B cell (primary cell): ENCODE measurements at regions of chr4 and their contacts with region 1.

Region 1: GRCh38 chr4:78845472-78845871 is 69.3 kb downstream of the BMP2K start:
- DNase-seq: peak; percentile 20
- ATAC-seq: peak; percentile 31
- H3K4me3 ChIP-seq: no peak overlapping the region
- H3K4me3 Mint-ChIP-seq: no peak overlapping the region
- H3K27ac ChIP-seq: peak overlapping the region in 1 of 2 donors; percentile 65
- H3K27ac Mint-ChIP-seq: peak overlapping the region; percentile 41
- H3K4me1 ChIP-seq: peaks cover 0 to 17% of the 10 kb centered on the region in 2 donors
- H3K4me1 Mint-ChIP-seq: peaks cover 31% of the 10 kb centered on the region
- H3K27me3 ChIP-seq: no peaks in the 10 kb centered on the region
- H3K27me3 Mint-ChIP-seq: no peaks in the 10 kb centered on the region
- CTCF ChIP-seq: no peak

Region 2: DNA sequence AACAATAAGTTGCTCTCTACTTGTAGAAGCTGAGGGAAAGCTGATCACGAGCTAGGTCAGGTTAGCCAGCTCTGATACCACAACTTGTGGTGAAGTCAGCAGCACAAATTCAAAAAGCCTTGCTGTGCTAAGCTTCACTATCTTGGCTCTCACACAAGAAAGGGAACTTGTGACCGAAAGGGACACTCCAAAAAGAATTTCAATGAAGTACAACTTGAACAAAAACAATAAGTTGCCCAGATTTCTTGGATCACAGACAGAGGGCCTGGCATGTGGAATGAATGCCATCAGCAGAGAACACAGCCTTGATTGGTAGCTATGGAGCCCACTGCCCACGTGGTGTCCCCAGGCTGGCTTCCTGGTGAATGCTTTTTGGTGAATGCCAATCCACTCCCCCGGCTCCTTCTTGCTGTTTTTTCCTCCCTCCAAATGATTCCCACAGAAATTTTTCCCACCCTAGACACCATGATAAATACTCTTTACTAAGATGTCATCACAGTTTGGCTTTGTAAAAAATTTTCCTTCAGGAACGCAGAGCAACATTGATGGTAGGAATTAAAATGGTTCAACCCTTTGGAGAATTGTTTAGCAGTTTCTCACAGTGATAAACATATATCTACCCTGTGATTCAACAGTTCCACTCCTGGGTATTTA is 211.3 kb before region 1 on chr4:
- CTCF ChIA-PET with region 1: no interaction called
- POLR2A ChIA-PET with region 1: no interaction called
- intact Hi-C with region 1: no loop called
- DNase-seq: peak; percentile 48
- ATAC-seq: no peak
- H3K4me3 ChIP-seq: no peak overlapping the region
- H3K4me3 Mint-ChIP-seq: no peak overlapping the region
- H3K27ac ChIP-seq: peak overlapping the region in 1 of 2 donors; percentile 50
- H3K27ac Mint-ChIP-seq: peak overlapping the region; percentile 60
- H3K4me1 ChIP-seq: peaks cover 71 to 73% of the 10 kb centered on the region in 2 donors
- H3K4me1 Mint-ChIP-seq: peaks cover 74% of the 10 kb centered on the region
- H3K27me3 ChIP-seq: no peaks in the 10 kb centered on the region
- H3K27me3 Mint-ChIP-seq: no peaks in the 10 kb centered on the region
- CTCF ChIP-seq: no peak

Region 3: DNA sequence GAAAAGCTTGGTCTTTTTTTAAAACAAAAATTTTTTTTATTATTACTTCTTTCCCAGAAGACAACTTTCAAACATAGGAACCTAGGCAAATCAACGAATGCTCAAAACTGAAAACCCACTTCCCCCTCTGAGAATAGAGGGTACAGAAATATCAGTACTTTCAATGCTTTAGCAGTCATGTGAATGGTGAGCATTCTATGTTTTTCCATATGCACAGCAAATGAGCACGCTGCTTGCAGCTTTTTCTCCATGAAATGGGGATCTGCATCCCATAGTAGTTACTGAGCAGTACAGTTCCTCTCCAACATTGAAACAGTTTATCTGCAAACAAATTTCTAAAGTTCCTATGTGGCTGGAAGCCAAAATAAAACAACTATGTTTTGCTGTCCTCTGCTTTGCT is 177.7 kb before region 1 on chr4:
- CTCF ChIA-PET with region 1: no interaction called
- POLR2A ChIA-PET with region 1: no interaction called
- intact Hi-C with region 1: no loop called
- DNase-seq: peak; percentile 47
- ATAC-seq: peak; percentile 62
- H3K4me3 ChIP-seq: peak overlapping the region in 2 of 5 experiments; percentile 26 to 28
- H3K4me3 Mint-ChIP-seq: peak overlapping the region; percentile 80
- H3K27ac ChIP-seq: peak overlapping the region; percentile 50 to 73
- H3K27ac Mint-ChIP-seq: peak overlapping the region; percentile 85
- H3K4me1 ChIP-seq: peaks cover 75 to 78% of the 10 kb centered on the region in 2 donors
- H3K4me1 Mint-ChIP-seq: peaks cover 88% of the 10 kb centered on the region
- H3K27me3 ChIP-seq: no peaks in the 10 kb centered on the region
- H3K27me3 Mint-ChIP-seq: no peaks in the 10 kb centered on the region
- CTCF ChIP-seq: no peak

Region 4: DNA sequence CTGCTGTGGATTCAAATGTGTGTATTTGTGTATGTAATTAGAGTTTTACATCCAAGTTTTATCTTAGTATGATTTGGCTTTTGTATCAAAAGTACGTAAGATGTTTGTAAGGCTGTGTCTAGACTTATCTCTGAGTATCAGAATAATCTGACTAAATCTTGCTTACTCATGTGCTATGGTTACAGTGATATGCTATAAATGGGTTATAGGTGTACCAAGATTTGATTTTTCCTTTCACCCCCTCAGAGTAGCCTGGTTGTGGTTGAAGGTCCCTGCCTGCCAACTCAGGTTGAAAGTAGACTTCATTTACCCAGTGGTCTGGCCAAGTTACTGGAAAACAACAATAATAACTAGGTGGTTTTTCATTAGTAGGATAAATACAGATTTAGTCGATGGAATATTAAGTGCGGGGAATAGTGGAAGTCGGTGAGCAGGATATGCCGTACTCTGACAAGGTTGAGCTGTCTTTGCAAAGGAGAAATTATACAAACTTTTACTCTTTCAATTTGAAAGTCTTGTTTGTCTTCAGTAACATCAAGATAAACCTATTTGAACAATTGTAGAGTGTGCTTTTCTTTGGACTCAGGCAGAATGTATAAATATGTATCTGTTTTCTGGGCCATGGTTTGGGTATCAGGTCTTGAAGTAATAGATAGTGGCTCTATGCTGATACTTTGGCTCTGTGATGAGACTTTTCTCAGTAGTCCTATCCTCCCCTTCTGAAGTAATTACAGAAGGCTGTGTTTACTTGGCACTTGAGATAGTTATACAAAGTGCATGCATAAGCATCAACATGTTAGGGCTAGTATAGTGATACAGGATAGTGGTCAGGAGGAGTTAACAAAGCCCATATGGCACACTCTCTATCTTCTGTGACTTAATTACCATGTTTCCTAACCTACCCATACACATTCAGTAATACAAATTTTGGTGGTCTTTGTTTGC is 45.6 kb before region 1 on chr4:
- CTCF ChIA-PET with region 1: no interaction called
- POLR2A ChIA-PET with region 1: no interaction called
- intact Hi-C with region 1: loop called (anchors 5 kb)
- DNase-seq: no peak
- ATAC-seq: peak; percentile 24
- H3K4me3 ChIP-seq: no peak overlapping the region
- H3K4me3 Mint-ChIP-seq: peak overlapping the region; percentile 33
- H3K27ac ChIP-seq: peak overlapping the region in 1 of 2 donors; percentile 71
- H3K27ac Mint-ChIP-seq: peak overlapping the region; percentile 7
- H3K4me1 ChIP-seq: peaks cover 24 to 56% of the 10 kb centered on the region in 2 donors
- H3K4me1 Mint-ChIP-seq: peaks cover 68% of the 10 kb centered on the region
- H3K27me3 ChIP-seq: no peaks in the 10 kb centered on the region
- H3K27me3 Mint-ChIP-seq: no peaks in the 10 kb centered on the region
- CTCF ChIP-seq: no peak

Region 5: DNA sequence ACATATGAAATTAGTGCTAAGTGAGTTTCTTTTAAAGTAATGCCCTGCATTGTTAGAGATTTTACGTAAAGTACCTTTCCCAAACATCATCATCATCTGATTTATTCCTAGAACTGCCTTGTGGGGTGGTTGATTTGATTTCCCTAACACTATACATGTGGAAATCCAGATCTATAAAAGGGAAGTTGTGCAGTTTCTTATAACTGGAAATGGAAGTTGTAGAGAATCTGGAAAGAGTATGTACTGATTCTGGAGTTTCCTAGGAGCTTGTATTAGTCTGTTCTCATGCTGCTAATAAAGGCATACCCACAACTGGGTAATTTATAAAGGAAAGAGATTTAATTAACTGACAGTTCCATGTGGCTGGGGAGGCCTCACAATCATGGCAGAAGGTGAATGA is 21.5 kb before region 1 on chr4:
- CTCF ChIA-PET with region 1: no interaction called
- POLR2A ChIA-PET with region 1: no interaction called
- intact Hi-C with region 1: no loop called
- DNase-seq: no peak
- ATAC-seq: no peak
- H3K4me3 ChIP-seq: no peak overlapping the region
- H3K4me3 Mint-ChIP-seq: no peak overlapping the region
- H3K27ac ChIP-seq: peak overlapping the region in 1 of 2 donors; percentile 3
- H3K27ac Mint-ChIP-seq: no peak overlapping the region
- H3K4me1 ChIP-seq: peaks cover 0 to 8% of the 10 kb centered on the region in 2 donors
- H3K4me1 Mint-ChIP-seq: peaks cover 48% of the 10 kb centered on the region
- H3K27me3 ChIP-seq: no peaks in the 10 kb centered on the region
- H3K27me3 Mint-ChIP-seq: no peaks in the 10 kb centered on the region
- CTCF ChIP-seq: no peak